ENCODE measurements at regions of chr13 and their contacts with region 1.

Region 1: DNA sequence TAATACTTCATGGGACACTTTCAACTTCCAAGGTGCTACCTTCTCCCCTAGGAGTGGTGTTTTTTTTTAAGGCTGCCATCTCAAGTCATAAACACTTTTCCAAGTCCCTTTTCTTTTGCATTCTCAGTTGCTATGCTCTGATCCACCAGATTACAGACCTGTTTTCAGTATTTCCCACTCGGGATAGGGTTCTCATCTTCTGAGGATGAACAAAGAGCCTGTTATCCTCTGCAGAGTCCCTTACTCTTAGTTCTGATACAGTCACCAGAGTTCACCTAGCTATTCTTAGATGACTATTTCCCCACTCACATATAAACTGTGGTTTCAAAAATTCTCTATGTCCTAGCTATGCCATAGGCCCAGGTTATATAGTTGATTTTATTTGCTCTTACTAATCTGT is 15.9 kb downstream of the ZDHHC20 start:
- DNase-seq: no peak
- H3K4me3 ChIP-seq: no peak overlapping the region
- H3K27ac ChIP-seq: no peak overlapping the region
- H3K4me1 ChIP-seq: no peaks in the 10 kb centered on the region
- CTCF ChIP-seq: no peak

Region 2: DNA sequence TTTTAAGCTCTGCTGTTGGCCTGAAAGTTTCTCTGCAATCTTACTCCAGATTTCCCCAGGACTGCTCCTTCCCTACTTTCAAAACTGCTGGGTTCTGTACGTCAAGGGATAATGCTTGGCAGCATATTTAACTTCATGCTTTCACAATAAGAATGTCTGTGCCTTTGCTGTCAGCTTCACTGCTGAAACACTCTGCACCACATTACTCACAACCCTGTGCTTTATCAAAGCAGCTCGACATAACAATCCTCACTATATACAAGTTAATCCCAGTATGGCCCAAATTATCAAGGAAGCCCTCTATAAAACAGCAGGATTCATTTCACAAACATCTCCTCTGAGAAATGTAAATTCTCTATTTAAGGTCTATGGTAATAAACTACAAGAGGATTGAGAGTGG is 399.3 kb before region 1 on chr13:
- CTCF ChIA-PET with region 1: no interaction called
- POLR2A ChIA-PET with region 1: no interaction called
- intact Hi-C with region 1: no loop called
- DNase-seq: no peak
- H3K4me3 ChIP-seq: no peak overlapping the region
- H3K27ac ChIP-seq: no peak overlapping the region
- H3K4me1 ChIP-seq: peaks cover 23% of the 10 kb centered on the region
- CTCF ChIP-seq: no peak

Region 3: DNA sequence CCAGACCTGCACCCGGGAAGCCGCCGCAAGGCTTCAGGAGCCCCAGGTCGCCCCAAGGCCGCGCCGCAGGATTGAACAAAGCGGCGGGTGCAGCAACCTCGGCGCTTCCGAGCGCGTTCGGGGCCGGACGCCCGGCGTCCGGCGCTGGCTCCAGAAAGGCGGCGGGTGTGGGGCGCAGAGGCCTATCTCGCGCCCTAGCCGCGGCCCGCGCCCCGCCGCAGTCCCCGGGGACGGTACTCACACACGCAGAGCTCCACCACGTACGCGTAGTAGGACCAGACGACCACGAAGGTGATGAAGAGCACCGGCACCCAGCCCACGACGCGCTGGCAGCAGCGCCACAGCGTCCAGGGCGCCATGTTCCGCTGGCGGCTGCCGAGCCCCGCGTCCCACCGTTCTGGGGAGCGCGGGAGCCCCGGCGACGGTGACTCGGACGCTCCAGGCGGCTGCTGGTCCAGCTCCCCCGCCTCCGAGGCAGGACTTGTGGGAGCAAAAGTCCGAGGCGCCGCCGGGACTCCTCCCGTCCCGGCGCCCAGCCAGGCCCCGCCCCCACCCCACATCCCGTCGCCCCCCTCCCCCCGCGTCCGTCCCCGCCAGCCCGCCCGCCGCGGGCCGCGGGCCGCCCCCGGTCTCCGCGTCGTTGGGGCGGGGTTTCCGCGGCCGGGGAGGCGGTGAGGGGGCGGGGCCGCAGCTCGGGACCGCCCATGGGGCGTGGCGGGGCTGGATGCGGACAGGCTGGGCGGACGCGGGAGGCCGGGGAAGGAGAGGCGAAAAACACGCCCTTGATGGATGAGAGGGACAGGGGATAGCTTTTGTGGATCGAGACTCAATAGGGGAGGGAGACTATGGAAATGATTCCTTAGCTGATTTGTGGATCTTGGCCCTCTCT is 15.9 kb after region 1 on chr13 and contains the start of gene ZDHHC20:
- CTCF ChIA-PET with region 1: no interaction called
- POLR2A ChIA-PET with region 1: no interaction called
- intact Hi-C with region 1: loop called (anchors 1 kb)
- DNase-seq: peak; percentile 86
- H3K4me3 ChIP-seq: peak within 1 kb of the TSS; percentile 81
- H3K27ac ChIP-seq: peak within 1 kb of the TSS; percentile 77
- H3K4me1 ChIP-seq: peaks cover 20% of the 10 kb centered on the region
- CTCF ChIP-seq: no peak
- total RNA-seq, gene ZDHHC20: 37.1 and 39.6 TPM in 2 replicates